A549 (cell line): ENCODE measurements at regions of chr3 and their contacts with region 1.

Region 1: GRCh38 chr3:185479373-185479945 is 19.4 kb downstream of the TMEM41A start:
- DNase-seq: no peak
- ATAC-seq: no peak
- H3K4me3 ChIP-seq: no peak overlapping the region
- H3K27ac ChIP-seq: no peak overlapping the region
- H3K4me1 ChIP-seq: no peaks in the 10 kb centered on the region
- CTCF ChIP-seq: no peak
- EP300 ChIP-seq: no peak
- POLR2A ChIP-seq: no peak
- RAD21 ChIP-seq: no peak

Region 2: GRCh38 chr3:185089343-185089742 is 390.1 kb before region 1 on chr3:
- CTCF ChIA-PET with region 1: no interaction called
- POLR2A ChIA-PET with region 1: no interaction called
- DNase-seq: no peak
- ATAC-seq: no peak
- H3K4me3 ChIP-seq: no peak overlapping the region
- H3K27ac ChIP-seq: no peak overlapping the region
- H3K4me1 ChIP-seq: no peaks in the 10 kb centered on the region
- CTCF ChIP-seq: no peak
- EP300 ChIP-seq: no peak
- POLR2A ChIP-seq: no peak
- RAD21 ChIP-seq: no peak

Region 3: DNA sequence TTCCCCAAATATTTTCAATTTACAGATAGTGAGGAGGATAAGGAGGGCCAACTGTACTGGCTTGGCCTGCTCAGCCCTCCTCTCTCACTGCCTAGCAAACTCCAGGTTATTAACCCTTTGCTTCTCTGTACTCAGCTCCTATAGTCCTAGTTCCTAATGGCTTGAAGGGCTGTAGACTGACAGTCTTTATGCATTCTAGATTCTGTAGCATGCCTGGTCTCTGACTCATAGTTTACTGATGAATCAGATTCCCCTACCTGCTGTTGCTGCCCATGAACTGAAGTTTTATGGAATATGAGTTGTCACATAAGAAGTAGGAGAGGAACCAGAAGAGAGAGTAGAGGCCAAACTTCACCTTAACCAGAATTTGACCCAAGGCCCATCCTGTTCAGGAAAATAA is 143.7 kb before region 1 on chr3:
- CTCF ChIA-PET with region 1: no interaction called
- POLR2A ChIA-PET with region 1: no interaction called
- DNase-seq: peak; percentile 54 to 80
- ATAC-seq: peak; percentile 78 to 82; a peak in 5 of 6 replicates
- H3K4me3 ChIP-seq: no peak overlapping the region
- H3K27ac ChIP-seq: peak overlapping the region; percentile 77 to 83
- H3K4me1 ChIP-seq: peaks cover 75% of the 10 kb centered on the region
- CTCF ChIP-seq: no peak
- EP300 ChIP-seq: no peak
- POLR2A ChIP-seq: no peak
- RAD21 ChIP-seq: peak in 1 of 2 experiments; percentile 12; a peak in 1 of 5 replicates

Region 4: GRCh38 chr3:185460719-185461350 is 18.6 kb before region 1 on chr3:
- CTCF ChIA-PET with region 1: interaction called, 12 read pairs
- POLR2A ChIA-PET with region 1: no interaction called
- DNase-seq: peak; percentile 21 to 26
- ATAC-seq: peak in 1 of 2 experiments; percentile 55; a peak in 2 of 6 replicates
- H3K4me3 ChIP-seq: no peak overlapping the region
- H3K27ac ChIP-seq: no peak overlapping the region
- H3K4me1 ChIP-seq: no peaks in the 10 kb centered on the region
- CTCF ChIP-seq: peak; percentile 50
- EP300 ChIP-seq: no peak
- POLR2A ChIP-seq: no peak
- RAD21 ChIP-seq: peak; percentile 52 to 53; a peak in 4 of 5 replicates

Region 5: GRCh38 chr3:185508335-185508991 is 29.0 kb after region 1 on chr3:
- CTCF ChIA-PET with region 1: no interaction called
- POLR2A ChIA-PET with region 1: no interaction called
- DNase-seq: no peak
- ATAC-seq: no peak
- H3K4me3 ChIP-seq: no peak overlapping the region
- H3K27ac ChIP-seq: no peak overlapping the region
- H3K4me1 ChIP-seq: no peaks in the 10 kb centered on the region
- CTCF ChIP-seq: no peak
- EP300 ChIP-seq: no peak
- POLR2A ChIP-seq: no peak
- RAD21 ChIP-seq: no peak